ENCODE measurements at regions of chr7 and their contacts with region 1.

Region 1: GRCh38 chr7:66269978-66270377 is 64.8 kb downstream of the TPST1 start:
- DNase-seq: no peak
- ATAC-seq: no peak
- H3K4me3 ChIP-seq: no peak overlapping the region
- H3K27ac ChIP-seq: no peak overlapping the region
- H3K4me1 ChIP-seq: peaks cover 0 to 14% (median 0%) of the 10 kb centered on the region in 9 donors
- H3K27me3 ChIP-seq: no peaks in the 10 kb centered on the region
- CTCF ChIP-seq: no peak

Region 2: DNA sequence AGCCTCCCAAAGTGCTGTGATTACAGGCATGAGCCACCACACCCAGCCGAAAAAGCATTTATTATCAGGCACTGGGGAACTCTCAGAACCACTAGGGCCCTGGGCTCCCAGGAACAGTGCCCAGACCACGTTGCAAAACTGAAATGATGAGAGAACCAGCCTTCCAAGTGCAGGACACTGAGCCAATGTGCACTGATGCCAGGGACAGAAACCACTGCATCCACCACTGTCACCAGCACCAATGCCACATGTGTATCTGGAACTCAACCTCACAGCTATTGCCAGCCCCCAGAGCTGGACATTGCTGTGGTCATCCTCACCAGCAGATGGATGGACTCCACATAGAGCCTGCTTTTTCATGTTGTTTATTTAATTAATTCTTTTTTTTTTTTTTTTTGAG is 93.1 kb before region 1 on chr7:
- intact Hi-C with region 1: no loop called
- DNase-seq: no peak
- ATAC-seq: peak in 1 of 8 donors; percentile 45
- H3K4me3 ChIP-seq: no peak overlapping the region
- H3K27ac ChIP-seq: no peak overlapping the region
- H3K4me1 ChIP-seq: no peaks in the 10 kb centered on the region
- H3K27me3 ChIP-seq: no peaks in the 10 kb centered on the region
- CTCF ChIP-seq: no peak

Region 3: GRCh38 chr7:66250711-66251110 is 19.3 kb before region 1 on chr7:
- intact Hi-C with region 1: no loop called
- DNase-seq: no peak
- ATAC-seq: no peak
- H3K4me3 ChIP-seq: no peak overlapping the region
- H3K27ac ChIP-seq: no peak overlapping the region
- H3K4me1 ChIP-seq: peaks cover 0 to 7% (median 0%) of the 10 kb centered on the region in 9 donors
- H3K27me3 ChIP-seq: no peaks in the 10 kb centered on the region
- CTCF ChIP-seq: no peak

Region 4: DNA sequence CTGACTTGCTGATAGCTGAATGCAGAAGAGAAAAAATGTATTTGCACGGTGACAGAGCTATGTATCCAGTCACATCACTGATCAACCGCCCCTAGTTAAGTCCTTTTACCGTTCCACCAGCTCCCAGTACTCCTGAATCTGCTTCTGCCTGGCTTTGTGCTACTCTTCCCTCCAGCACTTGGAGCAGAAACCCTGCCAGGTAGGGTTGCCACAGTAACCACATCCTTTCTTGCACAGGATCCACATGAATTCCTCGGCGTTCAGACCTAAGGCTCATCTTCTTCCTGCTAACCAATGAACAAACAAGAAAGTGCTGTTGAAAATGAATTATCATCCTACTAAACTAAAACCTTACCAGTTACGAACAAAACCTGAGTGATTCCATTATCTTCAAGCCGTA is 306.7 kb after region 1 on chr7:
- intact Hi-C with region 1: loop called in 1 of 10 experiments (anchors 5 kb)
- DNase-seq: no peak
- ATAC-seq: no peak
- H3K4me3 ChIP-seq: no peak overlapping the region
- H3K27ac ChIP-seq: no peak overlapping the region
- H3K4me1 ChIP-seq: peaks cover 0 to 12% (median 0%) of the 10 kb centered on the region in 9 donors
- H3K27me3 ChIP-seq: no peaks in the 10 kb centered on the region
- CTCF ChIP-seq: no peak

Measured in heart right ventricle (tissue), 16 donors.